ENCODE measurements at regions of chrX and their contacts with region 1.

Region 1: GRCh38 chrX:47384502-47384901 is 14.1 kb downstream of the ZNF157 start:
- DNase-seq: no peak
- H3K4me3 ChIP-seq: no peak overlapping the region
- H3K27me3 ChIP-seq: no peaks in the 10 kb centered on the region
- CTCF ChIP-seq: peak; percentile 80

Region 2: GRCh38 chrX:46831765-46832327 is 552.7 kb before region 1 on chrX:
- CTCF ChIA-PET with region 1: no interaction called
- POLR2A ChIA-PET with region 1: no interaction called
- DNase-seq: no peak
- H3K4me3 ChIP-seq: no peak overlapping the region
- H3K27me3 ChIP-seq: no peaks in the 10 kb centered on the region
- CTCF ChIP-seq: no peak

Region 3: DNA sequence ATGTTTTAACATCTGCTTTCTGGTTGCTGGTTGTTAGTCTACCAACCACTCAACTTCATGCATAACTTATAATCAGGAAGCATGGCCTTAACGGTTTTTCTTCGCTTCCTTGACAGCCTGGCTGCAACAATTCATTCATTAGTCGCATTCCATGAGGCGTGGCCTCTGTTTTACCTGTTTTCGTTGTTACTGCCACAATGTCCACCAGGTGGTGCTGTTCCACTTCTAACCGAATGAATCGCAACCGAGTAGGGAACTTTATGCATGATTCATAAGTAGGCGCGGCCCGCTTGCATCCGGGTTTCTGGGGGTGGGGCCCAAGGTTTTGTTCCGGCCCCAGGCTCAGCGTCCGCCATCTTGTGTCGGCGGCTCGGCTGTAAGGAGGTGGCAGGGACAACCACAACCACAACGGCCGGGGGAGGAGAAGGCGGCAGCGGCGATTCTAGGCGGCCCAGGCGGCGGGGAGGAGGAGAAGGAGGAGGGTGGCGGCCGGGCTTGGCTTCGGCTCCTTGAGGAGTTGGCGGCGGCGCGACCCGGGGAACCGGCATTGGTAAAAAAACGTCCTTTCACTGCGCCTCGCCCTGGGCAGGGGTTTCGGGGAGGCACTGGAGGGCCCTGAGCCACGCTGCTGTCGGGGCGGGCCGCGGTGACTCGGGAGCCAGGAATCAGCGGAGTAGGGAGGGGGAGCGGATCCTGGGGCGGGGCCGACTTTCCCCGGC is 190.9 kb before region 1 on chrX and contains the start of gene UBA1:
- CTCF ChIA-PET with region 1: interaction called, 26 read pairs
- POLR2A ChIA-PET with region 1: no interaction called
- DNase-seq: peak; percentile 49
- H3K4me3 ChIP-seq: peak within 1 kb of the TSS; percentile 80
- H3K27me3 ChIP-seq: no peaks in the 10 kb centered on the region
- CTCF ChIP-seq: peak; percentile 52
- polyA plus RNA-seq, gene UBA1: 185 and 296 TPM in 2 replicates

Measured in BJ (cell line).